Activated naive CD4-positive, alpha-beta T cell treated with anti-CD3 and anti-CD28 coated beads for 36 hours (primary cell): ENCODE measurements at regions of chr5 and their contacts with region 1.

Region 1: GRCh38 chr5:75566710-75567309 is 44.4 kb upstream of the ANKDD1B start:
- DNase-seq: peak; percentile 84
- H3K4me3 Mint-ChIP-seq: peak overlapping the region; percentile 48
- H3K27ac Mint-ChIP-seq: peak overlapping the region; percentile 95
- H3K4me1 Mint-ChIP-seq: peaks cover 55% of the 10 kb centered on the region
- H3K27me3 Mint-ChIP-seq: no peaks in the 10 kb centered on the region

Region 2: DNA sequence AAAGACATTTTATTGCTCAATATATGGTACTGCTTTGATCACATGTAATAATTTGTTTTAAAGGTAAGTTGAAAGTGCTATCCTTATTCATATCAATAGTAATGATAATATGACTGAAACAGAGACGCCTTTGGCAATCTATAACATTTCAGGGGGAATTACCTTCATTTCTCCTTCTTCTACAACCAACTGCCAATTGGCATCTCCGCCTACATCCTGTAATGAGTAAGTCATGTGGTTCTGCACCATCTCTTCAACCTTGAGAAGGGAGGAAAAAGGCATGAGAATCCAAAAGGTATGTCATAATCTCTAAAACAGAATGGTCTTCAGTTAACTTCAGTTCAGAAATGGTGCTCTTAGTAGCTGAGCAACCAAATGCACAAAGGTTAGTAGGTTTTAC is 177.4 kb before region 1 on chr5:
- CTCF ChIA-PET with region 1: interaction called, 3 read pairs
- intact Hi-C with region 1: loop called (anchors 1 kb)
- DNase-seq: peak; percentile 48
- H3K4me3 Mint-ChIP-seq: no peak overlapping the region
- H3K27ac Mint-ChIP-seq: peak overlapping the region; percentile 6
- H3K4me1 Mint-ChIP-seq: peaks cover 11% of the 10 kb centered on the region
- H3K27me3 Mint-ChIP-seq: no peaks in the 10 kb centered on the region

Region 3: GRCh38 chr5:75524071-75524470 is 42.7 kb before region 1 on chr5:
- CTCF ChIA-PET with region 1: no interaction called
- intact Hi-C with region 1: loop called (anchors 1 kb)
- DNase-seq: peak; percentile 30
- H3K4me3 Mint-ChIP-seq: peak overlapping the region; percentile 12
- H3K27ac Mint-ChIP-seq: peak overlapping the region; percentile 72
- H3K4me1 Mint-ChIP-seq: peaks cover 61% of the 10 kb centered on the region
- H3K27me3 Mint-ChIP-seq: no peaks in the 10 kb centered on the region

Region 4: GRCh38 chr5:76521240-76521758 is 954.5 kb after region 1 on chr5:
- CTCF ChIA-PET with region 1: no interaction called
- intact Hi-C with region 1: loop called (anchors 5 kb)
- DNase-seq: no peak
- H3K4me3 Mint-ChIP-seq: no peak overlapping the region
- H3K27ac Mint-ChIP-seq: peak overlapping the region; percentile 83
- H3K4me1 Mint-ChIP-seq: peaks cover 71% of the 10 kb centered on the region
- H3K27me3 Mint-ChIP-seq: no peaks in the 10 kb centered on the region